ENCODE measurements at regions of chr11 and their contacts with region 1.

Region 1: DNA sequence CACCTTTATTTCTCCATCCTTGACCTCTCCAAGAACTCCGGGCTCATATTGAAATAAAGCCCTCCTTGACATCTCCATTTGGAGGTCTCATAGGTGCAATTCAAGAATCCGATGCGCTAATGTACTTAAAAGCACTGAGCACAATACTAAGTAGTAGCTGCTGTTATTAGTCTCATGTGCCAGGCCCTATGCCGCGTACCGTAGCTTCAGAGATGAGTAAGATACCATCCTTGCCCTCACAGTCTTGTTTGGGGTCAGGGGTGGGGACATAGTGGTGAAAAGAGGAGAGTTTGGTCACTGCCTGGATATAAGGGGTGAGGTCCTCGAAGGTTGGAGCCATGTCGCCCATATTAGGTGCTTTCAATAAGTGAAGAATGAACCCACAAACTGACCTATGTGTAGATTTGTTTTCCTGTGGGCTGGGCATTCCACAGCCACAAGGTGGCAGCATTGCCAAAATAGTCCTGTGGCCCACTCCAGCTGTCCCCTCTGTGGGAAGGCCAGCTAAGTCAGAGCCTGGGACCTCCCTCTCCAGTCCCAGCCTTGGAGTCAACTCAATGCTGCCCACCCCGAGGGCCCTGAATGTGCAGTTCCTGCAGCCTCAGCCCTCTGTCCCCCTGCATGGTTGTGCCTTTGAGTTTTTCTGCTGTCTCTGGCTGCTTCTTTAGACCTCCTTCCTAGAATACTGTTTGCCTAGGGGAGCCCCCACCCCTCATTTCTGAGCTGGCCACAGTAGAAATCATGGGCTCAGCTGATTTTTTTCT is 6.5 kb downstream of the DCPS start:
- DNase-seq: peak; percentile 84
- H3K4me3 ChIP-seq: no peak overlapping the region
- H3K27ac ChIP-seq: no peak overlapping the region
- H3K4me1 ChIP-seq: no peaks in the 10 kb centered on the region
- H3K27me3 ChIP-seq: no peaks in the 10 kb centered on the region
- CTCF ChIP-seq: peak; percentile 96

Region 2: GRCh38 chr11:126416542-126417090 is 106.2 kb after region 1 on chr11:
- CTCF ChIA-PET with region 1: interaction called, 5 read pairs
- POLR2A ChIA-PET with region 1: no interaction called
- intact Hi-C with region 1: loop called (anchors 5 kb)
- DNase-seq: peak; percentile 91
- H3K4me3 ChIP-seq: peak overlapping the region; percentile 45
- H3K27ac ChIP-seq: peak overlapping the region; percentile 62
- H3K4me1 ChIP-seq: peaks cover 3% of the 10 kb centered on the region
- H3K27me3 ChIP-seq: no peaks in the 10 kb centered on the region
- CTCF ChIP-seq: no peak

Region 3: DNA sequence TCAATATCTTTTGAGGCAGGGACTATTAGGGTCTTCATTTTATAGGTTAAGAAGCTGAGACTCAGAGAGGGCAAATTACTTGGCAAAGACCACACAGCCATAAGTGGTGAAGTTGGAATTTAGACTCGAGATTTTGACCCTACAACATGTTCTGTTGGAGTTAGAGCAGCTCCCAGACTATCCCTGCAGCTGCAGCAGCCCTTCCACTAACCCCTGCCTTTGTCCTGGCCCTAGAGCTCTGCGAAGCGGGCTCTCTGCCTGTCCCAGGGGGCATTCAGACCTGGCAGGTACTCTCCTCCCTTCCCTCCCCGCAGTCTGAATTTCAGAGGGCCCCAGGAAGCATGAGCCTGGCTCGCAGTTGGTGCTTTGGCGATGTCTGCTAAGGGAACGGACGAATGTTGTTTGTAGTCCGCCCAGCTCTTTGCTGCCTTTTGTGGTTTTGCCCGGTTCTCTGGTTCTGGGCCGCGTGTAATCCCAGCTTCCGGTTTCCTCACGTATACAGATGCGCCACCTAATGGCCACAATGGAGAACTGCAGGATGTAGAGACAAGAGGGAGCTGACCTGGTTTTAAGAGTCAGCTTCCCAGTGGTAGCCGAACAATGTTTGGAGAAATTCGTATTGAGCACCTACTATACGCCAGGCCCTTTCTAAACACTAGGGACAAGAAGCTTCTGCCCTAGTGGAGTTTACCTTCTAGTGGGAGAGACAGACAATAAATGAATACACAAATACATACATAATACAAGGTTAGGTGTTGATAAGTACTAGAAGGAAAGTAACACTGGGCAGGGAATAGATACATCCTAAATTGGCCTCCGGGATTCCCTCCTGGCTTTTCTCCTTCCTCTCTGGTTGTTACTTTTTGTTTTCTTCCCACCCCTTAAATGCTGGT is 170.2 kb after region 1 on chr11:
- CTCF ChIA-PET with region 1: interaction called, 31 read pairs
- POLR2A ChIA-PET with region 1: no interaction called
- intact Hi-C with region 1: loop called (anchors 1 kb)
- DNase-seq: peak; percentile 94
- H3K4me3 ChIP-seq: no peak overlapping the region
- H3K27ac ChIP-seq: peak overlapping the region; percentile 61
- H3K4me1 ChIP-seq: peaks cover 19% of the 10 kb centered on the region
- H3K27me3 ChIP-seq: no peaks in the 10 kb centered on the region
- CTCF ChIP-seq: peak; percentile 99

Region 4: GRCh38 chr11:126573325-126574076 is 263.1 kb after region 1 on chr11:
- CTCF ChIA-PET with region 1: no interaction called
- POLR2A ChIA-PET with region 1: no interaction called
- intact Hi-C with region 1: loop called (anchors 10 kb)
- DNase-seq: peak; percentile 30
- H3K4me3 ChIP-seq: no peak overlapping the region
- H3K27ac ChIP-seq: no peak overlapping the region
- H3K4me1 ChIP-seq: no peaks in the 10 kb centered on the region
- H3K27me3 ChIP-seq: peaks cover 16% of the 10 kb centered on the region
- CTCF ChIP-seq: peak; percentile 60

Region 5: DNA sequence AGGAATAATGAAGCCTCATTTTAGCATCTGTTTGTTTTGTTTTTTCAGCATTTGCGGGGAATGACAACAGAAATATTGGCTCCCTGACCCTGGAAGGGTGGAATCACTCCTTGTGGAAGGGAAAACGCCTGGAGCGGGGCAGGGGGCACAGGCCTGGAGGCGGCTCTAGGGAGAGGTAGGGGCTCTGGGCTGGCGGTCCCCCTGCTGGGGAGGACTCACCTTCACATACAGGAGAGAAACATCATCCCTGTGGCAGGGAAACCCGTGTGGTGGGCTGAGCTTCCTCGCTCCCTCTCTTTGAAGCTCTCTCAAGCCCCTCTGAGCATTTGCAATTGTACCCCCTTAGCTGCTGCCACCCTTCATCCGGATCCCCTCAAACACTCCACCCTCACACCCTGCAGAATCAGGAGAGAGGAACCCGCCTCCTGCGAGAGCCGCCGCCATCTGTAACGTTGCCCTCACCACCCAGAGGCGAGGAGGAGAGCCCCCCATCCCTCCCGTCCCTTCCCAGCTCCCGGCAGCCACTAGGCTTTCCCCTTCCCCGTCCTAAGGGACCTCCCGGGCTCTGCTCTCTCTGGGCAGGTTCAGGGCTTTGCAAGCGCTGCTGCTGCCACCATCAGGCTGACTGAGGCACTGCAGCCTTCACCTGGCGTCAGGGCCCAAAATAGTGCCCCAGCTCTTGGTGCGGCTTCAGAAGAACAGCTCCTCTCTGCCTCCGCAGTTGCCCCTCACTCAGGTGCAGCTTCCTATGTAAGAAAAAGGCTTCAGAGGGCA is 679.7 kb after region 1 on chr11:
- CTCF ChIA-PET with region 1: no interaction called
- POLR2A ChIA-PET with region 1: no interaction called
- intact Hi-C with region 1: loop called (anchors 5 kb)
- DNase-seq: peak; percentile 83
- H3K4me3 ChIP-seq: no peak overlapping the region
- H3K27ac ChIP-seq: no peak overlapping the region
- H3K4me1 ChIP-seq: no peaks in the 10 kb centered on the region
- H3K27me3 ChIP-seq: peaks cover 16% of the 10 kb centered on the region
- CTCF ChIP-seq: peak; percentile 99

Region 6: GRCh38 chr11:127345819-127346459 is 1035.5 kb after region 1 on chr11:
- CTCF ChIA-PET with region 1: no interaction called
- POLR2A ChIA-PET with region 1: no interaction called
- intact Hi-C with region 1: loop called (anchors 5 kb)
- DNase-seq: peak; percentile 56
- H3K4me3 ChIP-seq: no peak overlapping the region
- H3K27ac ChIP-seq: no peak overlapping the region
- H3K4me1 ChIP-seq: no peaks in the 10 kb centered on the region
- H3K27me3 ChIP-seq: peaks cover 6% of the 10 kb centered on the region
- CTCF ChIP-seq: peak; percentile 91